Activated CD4-positive, alpha-beta memory T cell treated with anti-CD3 and anti-CD28 coated beads, Interleukin-2, amount 10 ng/mL, durations not matched to agents 7 days and 5 days (primary cell): ENCODE measurements at regions of chr9 and their contacts with region 1.

Region 1: GRCh38 chr9:126471084-126471624 is 142.6 kb upstream of the LMX1B start:
- DNase-seq: peak; percentile 92
- H3K4me3 Mint-ChIP-seq: peak overlapping the region; percentile 45
- H3K27ac Mint-ChIP-seq: peak overlapping the region; percentile 83
- H3K4me1 Mint-ChIP-seq: peaks cover 46% of the 10 kb centered on the region
- H3K27me3 Mint-ChIP-seq: peaks cover 64% of the 10 kb centered on the region

Region 2: DNA sequence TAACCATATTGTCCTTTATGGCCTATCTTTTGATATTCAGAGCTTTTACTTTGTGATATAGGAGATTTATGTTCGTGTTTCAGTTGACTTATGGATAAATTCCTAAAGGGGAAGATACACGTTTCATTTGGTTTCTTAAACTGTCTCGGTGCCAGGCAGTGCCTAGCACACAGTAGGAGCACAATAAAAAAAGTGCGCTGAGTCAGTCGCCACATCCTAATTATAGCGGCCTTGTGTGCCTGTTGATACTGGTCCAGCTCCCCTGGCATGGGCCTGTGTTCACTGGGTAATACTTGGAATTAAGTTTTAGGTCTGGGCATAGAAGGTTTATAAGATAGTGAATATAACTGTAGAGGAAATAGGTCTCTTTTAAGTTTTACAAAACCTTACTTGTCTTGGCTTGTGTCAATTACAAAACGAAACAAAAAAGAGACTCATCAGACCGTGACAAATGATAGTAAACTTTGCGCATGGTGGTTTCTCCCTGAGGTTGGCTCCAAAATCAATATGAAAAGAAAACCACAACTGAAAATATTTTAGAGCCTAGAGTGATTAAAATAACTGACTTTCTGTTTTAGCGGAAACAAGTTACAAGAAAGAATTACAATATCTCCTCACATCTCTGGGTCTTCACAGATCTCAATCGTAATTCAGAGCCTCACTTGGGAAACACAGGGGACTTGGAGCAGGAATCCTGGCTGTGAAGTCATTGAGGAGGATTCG is 59.8 kb before region 1 on chr9:
- CTCF ChIA-PET with region 1: no interaction called
- POLR2A ChIA-PET with region 1: interaction called, 13 read pairs
- DNase-seq: peak; percentile 54
- H3K4me3 Mint-ChIP-seq: peak overlapping the region; percentile 44
- H3K27ac Mint-ChIP-seq: peak overlapping the region; percentile 87
- H3K4me1 Mint-ChIP-seq: peaks cover 30% of the 10 kb centered on the region
- H3K27me3 Mint-ChIP-seq: no peaks in the 10 kb centered on the region

Region 3: GRCh38 chr9:126432659-126433058 is 38.5 kb before region 1 on chr9:
- CTCF ChIA-PET with region 1: no interaction called
- POLR2A ChIA-PET with region 1: no interaction called
- DNase-seq: no peak
- H3K4me3 Mint-ChIP-seq: no peak overlapping the region
- H3K27ac Mint-ChIP-seq: no peak overlapping the region
- H3K4me1 Mint-ChIP-seq: peaks cover 1% of the 10 kb centered on the region
- H3K27me3 Mint-ChIP-seq: peaks cover 24% of the 10 kb centered on the region

Region 4: DNA sequence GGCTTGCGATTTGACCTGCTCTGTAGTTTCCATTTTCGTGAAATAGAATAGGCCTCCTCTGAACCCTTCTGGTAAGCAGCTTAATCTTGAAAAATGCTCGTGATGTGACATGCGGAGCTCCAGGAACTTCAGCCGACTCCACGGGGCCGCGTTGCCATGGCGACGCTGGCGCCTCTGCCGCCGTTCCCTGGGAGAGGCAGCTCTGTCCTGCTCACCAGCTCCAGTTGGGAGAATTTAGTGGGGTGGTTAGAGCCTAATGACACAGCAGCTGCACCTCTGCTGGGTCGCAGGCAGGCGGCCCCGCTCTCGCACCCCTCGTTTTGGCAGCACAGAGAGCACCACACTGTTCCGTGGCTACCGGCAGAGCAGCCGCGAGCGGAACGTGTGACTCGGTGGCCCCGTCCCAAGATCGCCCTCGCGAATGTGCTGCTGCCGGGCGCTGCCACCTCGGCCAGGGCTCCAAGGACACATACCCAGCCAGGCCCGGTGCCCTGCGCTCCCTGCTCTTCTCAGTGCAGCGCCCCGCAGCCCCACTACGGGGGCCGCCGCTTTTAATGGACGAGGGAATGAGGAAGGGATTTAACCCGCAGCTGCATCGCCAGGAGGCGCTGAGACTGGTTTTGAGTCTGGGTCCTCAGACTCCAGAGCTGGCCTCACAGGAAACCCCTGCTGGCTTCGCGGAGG is 11.3 kb after region 1 on chr9:
- CTCF ChIA-PET with region 1: no interaction called
- POLR2A ChIA-PET with region 1: interaction called, 11 read pairs
- DNase-seq: no peak
- H3K4me3 Mint-ChIP-seq: no peak overlapping the region
- H3K27ac Mint-ChIP-seq: no peak overlapping the region
- H3K4me1 Mint-ChIP-seq: peaks cover 4% of the 10 kb centered on the region
- H3K27me3 Mint-ChIP-seq: peaks cover 25% of the 10 kb centered on the region